ENCODE measurements at regions of chr17 and their contacts with region 1.

Region 1: GRCh38 chr17:19447085-19447583 is 36.1 kb downstream of the RNF112 start:
- DNase-seq: peak; percentile 77
- ATAC-seq: peak; percentile 49
- H3K4me3 Mint-ChIP-seq: no peak overlapping the region
- H3K27ac Mint-ChIP-seq: no peak overlapping the region
- H3K4me1 Mint-ChIP-seq: peaks cover 2% of the 10 kb centered on the region
- H3K27me3 Mint-ChIP-seq: peaks cover 29% of the 10 kb centered on the region

Region 2: DNA sequence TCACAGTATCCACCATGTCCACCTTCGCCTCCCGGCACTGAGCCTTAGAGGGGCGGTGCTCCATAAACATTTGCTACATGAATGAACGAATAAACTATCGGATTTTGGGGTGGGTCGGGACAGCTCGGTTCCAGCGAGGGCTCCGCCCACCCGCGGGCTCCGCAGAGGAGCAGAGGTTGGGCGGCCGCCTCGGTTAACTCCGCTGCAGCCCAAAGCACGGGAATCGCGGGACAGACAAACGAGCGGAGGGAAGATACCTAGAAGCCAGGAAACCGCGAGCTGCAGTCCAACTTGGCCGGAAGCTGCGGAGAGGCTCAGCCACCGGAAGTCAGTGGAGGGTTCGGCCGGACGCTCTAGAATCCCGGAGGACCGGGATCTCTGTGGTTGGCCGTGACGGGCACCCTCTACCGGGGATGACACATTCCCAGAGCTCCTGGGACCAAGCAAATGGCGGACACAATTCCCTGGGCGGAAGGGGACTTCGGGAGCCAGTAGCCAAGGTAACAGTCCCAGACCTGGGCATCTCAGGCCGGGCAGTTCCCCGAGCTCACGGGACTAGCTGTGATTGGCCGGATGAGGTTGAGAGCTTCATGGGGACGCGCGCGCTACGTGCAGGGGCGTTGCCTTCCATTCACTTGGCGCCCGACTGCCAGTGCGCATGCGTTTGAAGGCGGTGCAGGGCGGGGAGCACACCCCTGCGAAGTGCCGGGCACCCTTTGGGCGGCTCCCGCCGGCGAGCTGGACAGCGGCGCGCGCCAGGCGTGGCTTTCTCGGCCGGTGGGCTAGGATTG is 69.3 kb before region 1 on chr17:
- CTCF ChIA-PET with region 1: interaction called, 13 read pairs
- DNase-seq: peak; percentile 98
- ATAC-seq: peak; percentile 96
- H3K4me3 Mint-ChIP-seq: peak overlapping the region; percentile 95
- H3K27ac Mint-ChIP-seq: peak overlapping the region; percentile 97
- H3K4me1 Mint-ChIP-seq: peaks cover 23% of the 10 kb centered on the region
- H3K27me3 Mint-ChIP-seq: peaks cover 6% of the 10 kb centered on the region

Region 3: GRCh38 chr17:19457830-19458271 is 10.7 kb after region 1 on chr17:
- CTCF ChIA-PET with region 1: interaction called, 21 read pairs
- DNase-seq: no peak
- ATAC-seq: no peak
- H3K4me3 Mint-ChIP-seq: no peak overlapping the region
- H3K27ac Mint-ChIP-seq: no peak overlapping the region
- H3K4me1 Mint-ChIP-seq: peaks cover 5% of the 10 kb centered on the region
- H3K27me3 Mint-ChIP-seq: peaks cover 26% of the 10 kb centered on the region

Region 4: GRCh38 chr17:19494961-19495806 is 48.0 kb after region 1 on chr17:
- CTCF ChIA-PET with region 1: no interaction called
- DNase-seq: no peak
- ATAC-seq: no peak
- H3K4me3 Mint-ChIP-seq: no peak overlapping the region
- H3K27ac Mint-ChIP-seq: no peak overlapping the region
- H3K4me1 Mint-ChIP-seq: peaks cover 2% of the 10 kb centered on the region
- H3K27me3 Mint-ChIP-seq: peaks cover 5% of the 10 kb centered on the region

Measured in activated CD8-positive, alpha-beta memory T cell treated with anti-CD3 and anti-CD28 coated beads, Interleukin-2, amount 10 ng/mL, durations not matched to agents 7 days and 5 days (primary cell).